ENCODE measurements at regions of chr17 and their contacts with region 1.

Region 1: GRCh38 chr17:61002316-61002736 is 324.7 kb downstream of the BCAS3 start:
- DNase-seq: no peak
- ATAC-seq: peak; percentile 66
- H3K4me3 ChIP-seq: no peak overlapping the region
- H3K27ac ChIP-seq: peak overlapping the region; percentile 52; the same call in 1 of the 2 replicates
- H3K4me1 ChIP-seq: no peaks in the 10 kb centered on the region; the same call in 1 of the 2 replicates
- H3K27me3 ChIP-seq: no peaks in the 10 kb centered on the region
- CTCF ChIP-seq: peak; percentile 52; the same call in 1 of the 2 replicates

Region 2: DNA sequence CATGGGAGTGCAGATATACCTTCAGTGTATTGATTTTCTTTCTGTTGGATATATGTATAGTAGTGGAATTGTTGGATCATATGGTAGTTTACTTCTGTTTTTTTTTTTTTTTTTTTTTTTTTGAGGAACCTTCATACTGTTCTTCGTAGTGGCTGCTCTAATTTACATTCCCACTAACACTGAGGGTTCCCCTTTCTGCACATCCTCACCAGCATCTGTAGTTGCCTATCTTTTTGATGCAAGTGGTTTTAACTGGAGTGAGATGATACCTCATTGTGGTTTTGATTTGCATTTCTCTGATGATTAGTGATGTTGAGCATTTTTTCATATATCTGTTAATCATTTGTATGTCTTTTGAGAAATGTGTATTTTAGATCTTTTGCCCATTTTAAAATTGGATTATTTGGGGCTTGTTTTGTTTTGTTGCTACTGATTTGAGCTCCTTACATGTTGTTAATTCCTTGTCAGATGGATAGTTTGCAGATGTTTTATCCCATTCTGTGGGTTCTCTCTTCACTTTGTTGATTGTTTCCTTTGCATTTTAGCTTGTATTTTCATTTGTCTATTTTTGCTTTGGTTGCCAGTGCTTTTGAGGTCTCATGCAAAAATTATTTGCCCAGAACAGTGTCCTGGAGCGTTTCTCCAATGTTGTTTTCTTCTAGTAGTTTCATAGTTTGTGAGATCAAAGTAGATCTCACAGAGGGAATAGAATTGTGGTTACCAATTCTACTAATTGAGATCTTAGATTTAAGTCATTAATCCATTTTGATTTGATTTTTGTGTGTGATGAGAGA is 349.7 kb before region 1 on chr17:
- CTCF ChIA-PET with region 1: no interaction called
- POLR2A ChIA-PET with region 1: no interaction called
- in situ Hi-C with region 1: no loop called
- intact Hi-C with region 1: no loop called
- DNase-seq: no peak
- ATAC-seq: no peak
- H3K4me3 ChIP-seq: no peak overlapping the region
- H3K27ac ChIP-seq: no peak overlapping the region
- H3K4me1 ChIP-seq: no peaks in the 10 kb centered on the region
- H3K27me3 ChIP-seq: no peaks in the 10 kb centered on the region
- CTCF ChIP-seq: no peak

Region 3: GRCh38 chr17:61157246-61157886 is 155.0 kb after region 1 on chr17:
- CTCF ChIA-PET with region 1: no interaction called
- POLR2A ChIA-PET with region 1: no interaction called
- in situ Hi-C with region 1: no loop called
- intact Hi-C with region 1: loop called (anchors 10 kb)
- DNase-seq: no peak
- ATAC-seq: peak; percentile 96
- H3K4me3 ChIP-seq: peak overlapping the region; percentile 30 to 38
- H3K27ac ChIP-seq: peak overlapping the region; percentile 98
- H3K4me1 ChIP-seq: peaks cover 40% of the 10 kb centered on the region
- H3K27me3 ChIP-seq: no peaks in the 10 kb centered on the region
- CTCF ChIP-seq: peak; percentile 16

Region 4: DNA sequence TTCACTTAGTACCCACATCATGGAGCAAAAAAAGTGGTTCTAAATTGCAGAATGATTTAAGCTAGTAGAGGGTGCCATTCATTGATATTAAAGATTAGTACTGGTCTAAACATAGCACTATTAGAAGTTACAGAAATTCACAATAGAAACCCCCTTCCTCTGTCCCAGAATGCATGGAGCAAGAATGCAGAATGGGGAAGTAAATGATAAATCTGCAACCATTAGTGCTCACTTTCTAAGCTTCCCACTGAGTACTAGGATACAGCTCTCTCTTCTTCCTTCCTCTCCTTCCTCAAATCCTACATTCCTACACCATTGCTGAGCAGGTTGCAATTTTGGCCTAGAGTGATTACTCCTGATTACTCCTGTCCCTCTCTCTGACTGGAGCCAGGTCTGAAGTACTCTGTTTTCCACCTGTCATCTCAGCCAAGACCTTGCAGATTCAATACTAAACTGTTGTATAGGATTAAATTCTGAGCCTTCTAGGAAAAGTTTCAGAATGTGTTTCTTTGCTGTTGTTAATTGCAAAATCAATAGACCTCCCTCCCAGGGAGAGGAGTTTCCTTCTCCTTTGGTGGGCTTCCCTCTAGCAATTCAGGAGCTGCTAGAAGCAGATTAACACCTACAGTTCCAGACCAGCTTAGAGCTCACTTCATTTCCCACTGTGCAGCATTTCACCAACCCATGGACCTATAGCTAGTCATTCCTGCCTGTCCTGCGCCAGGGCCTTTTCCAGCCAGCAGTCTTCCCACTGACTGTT is 231.8 kb after region 1 on chr17:
- CTCF ChIA-PET with region 1: interaction called, 15 read pairs
- POLR2A ChIA-PET with region 1: no interaction called
- in situ Hi-C with region 1: no loop called
- intact Hi-C with region 1: no loop called
- DNase-seq: no peak
- ATAC-seq: no peak
- H3K4me3 ChIP-seq: no peak overlapping the region
- H3K27ac ChIP-seq: peak overlapping the region; percentile 87
- H3K4me1 ChIP-seq: peaks cover 33% of the 10 kb centered on the region
- H3K27me3 ChIP-seq: no peaks in the 10 kb centered on the region
- CTCF ChIP-seq: no peak

Region 5: DNA sequence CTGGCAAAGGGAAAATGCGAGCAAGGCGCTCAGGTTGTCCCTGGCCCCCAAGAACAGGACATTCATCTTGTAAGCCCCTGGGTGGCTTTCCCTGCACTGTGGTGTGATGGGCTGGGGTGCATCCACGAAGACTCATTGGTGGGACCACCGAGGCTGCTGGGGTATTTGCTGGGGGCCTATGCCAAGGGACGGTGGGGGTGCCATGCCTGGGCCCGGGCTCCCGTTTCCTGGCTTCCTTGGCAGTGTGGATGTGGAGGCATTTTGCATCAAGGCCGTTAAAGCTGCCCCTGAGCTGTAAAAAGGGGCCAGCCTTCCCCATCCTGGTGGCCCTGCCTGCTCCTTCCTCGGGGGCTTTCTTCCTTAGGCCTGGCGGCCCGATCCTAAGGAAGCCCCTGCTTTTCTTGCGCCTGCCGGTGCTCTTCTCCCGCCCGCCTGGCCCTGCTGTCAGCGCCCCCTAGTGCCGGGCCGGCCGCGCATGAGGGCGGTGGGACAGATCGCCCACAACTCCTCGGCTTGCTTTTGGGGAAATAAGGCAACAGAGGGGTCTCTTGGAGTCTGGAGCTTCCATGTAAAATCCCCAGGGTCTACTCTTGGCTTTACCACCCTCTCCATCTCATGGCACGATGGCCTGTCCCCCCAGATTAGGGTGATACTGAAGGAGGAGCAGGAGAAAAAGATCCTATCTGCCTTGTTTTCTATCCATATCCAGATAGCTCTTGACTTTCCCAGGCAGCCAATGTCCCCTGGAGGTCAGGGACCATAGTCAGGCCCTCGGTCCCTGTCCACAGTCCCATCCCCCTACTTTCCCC is 387.5 kb after region 1 on chr17:
- CTCF ChIA-PET with region 1: no interaction called
- POLR2A ChIA-PET with region 1: no interaction called
- in situ Hi-C with region 1: no loop called
- intact Hi-C with region 1: loop called (anchors 10 kb)
- DNase-seq: no peak
- ATAC-seq: peak; percentile 73
- H3K4me3 ChIP-seq: no peak overlapping the region
- H3K27ac ChIP-seq: peak overlapping the region; percentile 70
- H3K4me1 ChIP-seq: peaks cover 42% of the 10 kb centered on the region
- H3K27me3 ChIP-seq: no peaks in the 10 kb centered on the region
- CTCF ChIP-seq: peak; percentile 99

Measured in Panc1 (cell line).